ENCODE measurements at regions of chr5 and their contacts with region 1.

Region 1: DNA sequence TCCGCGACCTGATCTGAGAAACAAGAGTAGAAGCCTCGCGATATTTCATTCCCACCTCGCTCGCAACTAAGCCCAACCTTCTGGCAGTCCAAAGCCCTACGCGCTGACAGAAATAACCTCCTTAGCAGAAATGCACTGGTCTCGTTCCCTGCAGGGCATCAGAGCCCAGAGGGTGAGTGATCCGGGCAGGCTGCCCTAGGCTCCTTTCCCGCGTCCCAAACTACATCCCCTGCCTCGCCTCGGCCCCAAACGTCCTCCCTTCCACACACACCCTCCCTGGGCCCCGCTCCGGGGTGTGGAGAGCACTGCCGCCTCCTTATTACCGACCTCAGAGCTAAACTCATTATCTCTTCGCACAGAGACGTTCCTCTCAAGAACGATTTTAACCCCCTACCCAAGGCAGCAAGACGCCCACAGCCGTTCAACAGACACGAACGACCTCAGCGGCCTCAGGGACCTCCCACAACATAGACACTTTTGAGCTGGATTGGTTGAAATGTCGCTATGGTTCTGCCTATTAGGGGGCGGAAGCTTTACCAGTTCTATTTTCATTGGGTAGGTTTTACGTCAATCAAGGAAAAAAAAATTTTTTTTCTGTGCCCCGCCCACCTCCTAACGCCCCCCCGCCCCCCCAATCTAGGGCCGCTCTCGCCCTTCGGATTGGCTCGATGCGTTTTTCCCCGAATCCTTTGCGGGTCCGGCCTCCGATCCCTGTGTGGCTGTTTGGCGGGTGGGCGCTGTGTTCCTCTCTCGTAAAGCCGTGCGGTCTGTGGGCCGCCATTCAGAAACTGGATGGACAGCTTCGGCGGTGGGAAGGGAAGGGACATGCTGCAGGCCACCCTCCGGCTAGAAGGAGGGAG is at the start of gene CETN3:
- DNase-seq: peak; percentile 95
- H3K4me3 Mint-ChIP-seq: no peak within 1 kb of the TSS
- H3K27ac Mint-ChIP-seq: no peak within 1 kb of the TSS
- H3K4me1 Mint-ChIP-seq: peaks cover 17% of the 10 kb centered on the region
- H3K27me3 Mint-ChIP-seq: no peaks in the 10 kb centered on the region
- CTCF ChIP-seq: no peak
- total RNA-seq, gene CETN3: 30.0 and 40.3 TPM in 2 replicates

Region 2: GRCh38 chr5:90201923-90202322 is 207.6 kb before region 1 on chr5:
- CTCF ChIA-PET with region 1: no interaction called
- intact Hi-C with region 1: loop called (anchors 5 kb)
- DNase-seq: peak; percentile 77
- H3K4me3 Mint-ChIP-seq: peak overlapping the region; percentile 3
- H3K27ac Mint-ChIP-seq: peak overlapping the region; percentile 90
- H3K4me1 Mint-ChIP-seq: peaks cover 42% of the 10 kb centered on the region
- H3K27me3 Mint-ChIP-seq: no peaks in the 10 kb centered on the region
- CTCF ChIP-seq: no peak

Region 3: GRCh38 chr5:90474235-90475109 is 64.9 kb after region 1 on chr5 and contains the starts of genes MBLAC2 and POLR3G:
- CTCF ChIA-PET with region 1: no interaction called
- intact Hi-C with region 1: no loop called
- DNase-seq: peak; percentile 97
- H3K4me3 Mint-ChIP-seq: peak within 1 kb of the TSS; percentile 99
- H3K27ac Mint-ChIP-seq: peak within 1 kb of the TSS; percentile 78
- H3K4me1 Mint-ChIP-seq: peaks cover 28% of the 10 kb centered on the region
- H3K27me3 Mint-ChIP-seq: no peaks in the 10 kb centered on the region
- CTCF ChIP-seq: peak; percentile 57
- total RNA-seq, gene MBLAC2: 9.6 and 11.0 TPM in 2 replicates
- total RNA-seq, gene POLR3G: 15.0 and 16.6 TPM in 2 replicates